ENCODE measurements at regions of chr12 and their contacts with region 1.

Region 1: DNA sequence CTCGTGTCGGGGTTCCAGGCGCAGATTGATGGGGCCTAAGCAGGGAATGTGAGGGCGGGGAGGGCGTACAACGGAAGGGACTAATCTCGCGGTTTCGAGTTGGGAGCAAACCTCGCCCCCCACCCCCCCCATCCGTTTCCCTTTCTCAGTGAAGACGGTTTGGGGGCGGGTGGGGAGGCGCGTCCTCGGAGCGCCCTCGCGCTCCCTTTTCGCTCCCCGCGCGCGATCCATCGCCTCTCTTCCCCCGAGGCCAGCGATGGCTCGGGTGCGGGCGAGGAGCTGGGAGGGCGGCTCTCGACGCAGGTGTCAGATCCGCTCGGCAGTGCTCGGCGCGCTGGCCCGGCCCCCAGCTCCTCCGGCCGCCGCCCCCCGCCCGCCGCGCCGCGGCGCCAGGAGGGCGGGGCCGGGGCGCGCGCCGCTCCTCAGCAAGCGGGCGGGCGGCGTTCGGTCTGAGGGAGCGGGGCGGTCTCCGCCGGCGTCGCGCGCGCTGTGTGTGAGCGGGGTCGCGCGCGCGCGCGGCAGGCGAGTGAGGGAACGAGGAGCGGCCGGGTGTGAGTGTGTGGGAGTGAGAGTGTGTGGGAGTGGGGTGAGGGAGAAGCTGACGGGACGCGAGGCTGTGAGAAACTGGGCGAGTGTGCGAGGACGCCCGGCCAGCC is at the start of gene RIMKLB:
- DNase-seq: peak; percentile 78
- H3K4me3 ChIP-seq: peak within 1 kb of the TSS; percentile 58 to 90 (median 87)
- H3K27ac ChIP-seq: peak within 1 kb of the TSS; percentile 83
- H3K4me1 ChIP-seq: peaks cover 30% of the 10 kb centered on the region
- H3K27me3 ChIP-seq: no peaks in the 10 kb centered on the region
- CTCF ChIP-seq: no peak
- POLR2A ChIP-seq: no peak
- total RNA-seq, gene RIMKLB: 64.3 and 92.6 TPM in 2 replicates

Region 2: GRCh38 chr12:8709124-8709830 is 11.7 kb after region 1 on chr12:
- CTCF ChIA-PET with region 1: interaction called, 5 read pairs
- POLR2A ChIA-PET with region 1: no interaction called
- dilution Hi-C with region 1: no loop called
- intact Hi-C with region 1: loop called (anchors 1 kb)
- DNase-seq: peak; percentile 60
- H3K4me3 ChIP-seq: peak overlapping the region in 1 of 3 experiments; percentile 21
- H3K27ac ChIP-seq: peak overlapping the region; percentile 15
- H3K4me1 ChIP-seq: peaks cover 22% of the 10 kb centered on the region
- H3K27me3 ChIP-seq: no peaks in the 10 kb centered on the region
- CTCF ChIP-seq: no peak
- POLR2A ChIP-seq: no peak

Measured in endothelial cell of umbilical vein (primary cell).